Lower leg skin (tissue), 4 donors: ENCODE measurements at regions of chr3 and their contacts with region 1.

Region 1: DNA sequence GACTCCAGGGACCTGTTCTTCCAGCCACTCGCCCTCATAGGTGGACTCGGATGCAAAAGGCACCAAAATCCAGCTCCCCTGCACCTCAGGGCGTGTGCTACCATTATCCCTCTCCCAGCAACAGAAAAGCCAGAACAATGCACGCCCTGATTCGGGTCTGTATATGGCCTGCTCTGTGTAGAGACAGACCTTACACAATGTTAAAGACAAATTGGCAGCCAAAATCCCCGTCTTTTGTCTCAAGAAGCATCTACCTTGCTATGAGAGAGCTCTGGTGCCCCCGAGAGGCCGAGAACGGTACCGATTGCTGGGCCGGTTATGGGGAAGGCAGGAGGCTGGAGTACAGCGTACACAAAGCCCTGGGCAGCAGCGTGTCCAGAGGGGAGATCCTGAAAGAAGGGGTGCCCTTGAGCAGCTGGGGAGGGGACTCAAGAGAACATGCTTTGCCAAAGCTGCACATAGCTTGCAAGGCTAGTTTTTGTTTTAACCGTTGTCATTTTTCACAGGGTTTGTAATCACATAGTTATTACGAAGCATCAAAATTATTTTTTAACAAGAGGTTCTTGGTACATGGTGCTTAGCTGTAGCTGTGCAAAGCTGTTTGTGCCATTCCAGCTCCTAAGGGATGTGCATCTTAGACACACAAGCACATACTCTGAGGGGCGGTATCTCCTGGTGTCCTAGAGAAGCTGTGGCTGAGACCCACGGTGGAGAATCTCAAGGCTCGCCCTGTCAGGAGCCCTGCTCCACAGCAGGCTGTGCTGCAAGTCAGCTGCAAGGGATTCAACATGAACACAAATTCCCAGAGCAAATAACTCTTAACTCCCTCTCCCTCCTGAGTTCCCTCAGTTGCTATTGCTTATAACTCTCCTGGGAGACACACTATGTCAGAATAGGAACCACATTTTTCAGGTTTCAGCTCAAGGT is 461.5 kb upstream of the PPP2R3A start:
- DNase-seq: peak in 1 of 2 donors; percentile 44
- H3K4me3 ChIP-seq: no peak overlapping the region
- CTCF ChIP-seq: no peak
- POLR2A ChIP-seq: no peak

Region 2: DNA sequence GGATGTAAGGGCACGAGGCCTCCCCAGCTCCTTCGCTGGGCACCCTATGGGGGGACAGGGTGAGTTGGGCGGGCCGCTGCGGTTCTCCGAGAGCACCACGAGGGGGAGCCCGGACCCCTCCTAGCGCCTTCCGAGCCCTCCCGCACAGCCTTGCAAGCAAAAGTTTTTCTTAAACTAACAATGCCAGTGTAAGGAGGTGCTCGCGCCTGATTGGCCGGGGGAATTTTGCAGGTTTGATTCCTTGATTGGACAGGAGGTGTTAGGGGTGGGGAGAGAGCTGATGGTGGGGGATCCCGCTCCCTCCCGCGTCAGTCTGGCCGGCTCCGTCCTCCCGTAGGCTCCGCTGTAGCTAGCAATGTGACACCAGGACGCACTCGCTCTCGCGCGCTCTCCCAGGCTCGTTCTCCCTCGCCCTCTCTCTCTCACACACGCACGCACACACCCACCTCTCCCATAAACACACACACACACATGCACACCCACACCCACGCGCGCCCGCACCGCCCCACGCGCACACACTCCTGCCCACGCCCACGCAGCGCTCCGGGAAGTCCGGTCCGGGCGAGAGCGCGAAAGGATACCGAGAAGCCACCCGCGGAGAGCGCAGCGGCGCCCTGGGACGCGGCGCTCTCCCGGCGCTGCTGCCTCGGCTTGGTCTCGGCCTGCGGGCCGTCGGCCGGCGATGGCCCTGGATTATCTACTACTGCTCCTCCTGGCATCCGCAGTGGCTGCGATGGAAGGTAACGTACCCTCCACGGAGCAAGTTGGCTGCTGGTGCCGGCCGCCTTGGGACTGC is 708.9 kb before region 1 on chr3 and contains the start of gene EPHB1:
- intact Hi-C with region 1: loop called (anchors 5 kb)
- DNase-seq: peak; percentile 82 to 95
- H3K4me3 ChIP-seq: peak within 1 kb of the TSS; percentile 45
- CTCF ChIP-seq: peak in 1 of 3 donors; percentile 46
- POLR2A ChIP-seq: no peak
- total RNA-seq, gene EPHB1: 11.1 to 14.2 (median 13.0) TPM